Endothelial cell of umbilical vein (primary cell): ENCODE measurements at regions of chr6 and their contacts with region 1.

Region 1: DNA sequence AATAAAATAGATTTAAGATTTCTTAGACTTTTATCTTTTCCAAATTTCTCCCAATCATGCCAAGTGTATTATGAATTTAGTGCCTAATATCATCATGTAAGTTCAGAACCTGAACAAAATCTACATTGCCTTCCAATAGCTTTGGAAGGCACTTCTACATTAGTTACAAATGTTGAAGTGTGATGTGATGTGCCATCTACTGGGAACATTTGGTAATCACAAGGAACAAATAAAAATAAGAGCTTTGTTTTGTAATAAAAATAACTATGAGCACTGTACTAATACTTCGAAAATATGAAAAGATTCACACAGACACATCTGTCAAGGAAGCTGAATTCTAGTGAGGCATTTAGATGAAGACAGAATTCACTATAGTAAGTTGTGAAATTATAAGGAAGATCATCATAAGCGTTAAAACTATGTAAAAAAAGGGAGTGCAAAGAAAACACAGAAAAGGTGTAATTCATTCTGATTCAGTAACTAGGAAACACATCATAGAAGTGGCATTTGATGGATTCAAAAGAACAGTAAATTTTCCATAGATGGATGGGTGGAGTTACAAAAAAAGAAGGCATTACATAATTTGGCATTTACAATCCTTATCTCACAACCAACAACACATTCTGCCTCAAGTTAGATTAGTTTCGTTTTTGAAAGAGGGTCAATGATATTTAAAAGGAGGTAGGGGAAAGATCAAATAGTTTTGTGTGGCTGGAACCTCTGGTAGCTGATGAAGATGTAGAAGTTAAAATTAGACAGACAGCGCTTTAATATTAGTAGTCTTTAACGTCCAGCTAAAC is 161.0 kb downstream of the ASCC3 start:
- DNase-seq: peak; percentile 76
- H3K4me3 ChIP-seq: peak overlapping the region; percentile 16 to 83 (median 53)
- H3K27ac ChIP-seq: peak overlapping the region; percentile 48
- H3K4me1 ChIP-seq: peaks cover 4% of the 10 kb centered on the region
- H3K27me3 ChIP-seq: no peaks in the 10 kb centered on the region
- CTCF ChIP-seq: peak; percentile 18 to 22
- POLR2A ChIP-seq: no peak

Region 2: DNA sequence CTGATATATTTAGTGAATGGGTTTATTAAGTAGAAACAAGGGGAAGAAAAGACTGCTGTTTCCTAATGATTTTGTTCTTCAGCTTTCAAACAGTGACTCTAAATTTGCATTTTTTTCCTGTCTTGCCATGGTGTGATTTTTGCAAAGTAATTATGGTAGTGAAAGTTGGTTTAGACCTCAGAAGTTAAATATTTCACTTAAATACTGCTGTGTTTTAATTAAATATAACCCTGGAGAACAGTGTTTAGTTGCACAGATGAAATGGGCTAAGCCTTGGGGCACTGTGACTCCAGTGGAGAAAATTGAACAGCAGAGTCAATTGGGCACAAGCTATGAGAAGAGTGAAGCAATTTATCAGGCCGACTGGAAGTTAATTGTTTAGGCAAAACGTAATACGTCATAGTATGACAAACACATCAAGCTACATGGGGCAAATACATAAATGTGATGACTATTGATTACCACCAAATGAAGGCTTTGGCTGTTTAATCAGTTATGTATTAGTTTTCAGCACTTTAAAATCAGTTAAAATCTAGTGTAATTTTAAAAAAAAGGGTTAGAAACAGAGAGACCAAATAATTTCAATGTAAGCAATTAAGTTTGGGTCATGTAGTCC is 614.8 kb before region 1 on chr6:
- CTCF ChIA-PET with region 1: interaction called, 28 read pairs
- POLR2A ChIA-PET with region 1: no interaction called
- dilution Hi-C with region 1: no loop called
- intact Hi-C with region 1: loop called (anchors 5 kb)
- DNase-seq: no peak
- H3K4me3 ChIP-seq: no peak overlapping the region
- H3K27ac ChIP-seq: no peak overlapping the region
- H3K4me1 ChIP-seq: no peaks in the 10 kb centered on the region
- H3K27me3 ChIP-seq: peaks cover 11 to 25% of the 10 kb centered on the region in 2 experiments
- CTCF ChIP-seq: no peak
- POLR2A ChIP-seq: no peak

Region 3: DNA sequence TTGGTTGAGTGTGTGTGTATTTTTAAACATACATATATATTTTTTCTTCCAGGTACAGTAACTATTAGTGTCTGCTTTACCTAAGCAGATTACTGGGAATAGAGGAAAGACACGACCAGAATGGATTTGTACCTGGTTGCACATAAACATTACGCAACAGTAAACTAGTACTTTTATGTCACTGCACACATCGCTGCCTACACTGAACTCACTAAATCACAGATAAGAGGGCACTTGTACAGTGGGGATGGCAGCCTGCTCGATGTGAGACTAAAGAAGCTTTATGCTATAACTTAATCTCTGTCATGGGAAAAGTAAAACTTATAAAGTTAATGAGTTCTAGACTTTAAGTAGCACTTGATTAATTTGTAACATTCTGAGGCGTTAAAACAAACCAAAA is 165.9 kb before region 1 on chr6:
- CTCF ChIA-PET with region 1: no interaction called
- POLR2A ChIA-PET with region 1: no interaction called
- dilution Hi-C with region 1: no loop called
- intact Hi-C with region 1: no loop called
- DNase-seq: no peak
- H3K4me3 ChIP-seq: no peak overlapping the region
- H3K27ac ChIP-seq: no peak overlapping the region
- H3K4me1 ChIP-seq: no peaks in the 10 kb centered on the region
- H3K27me3 ChIP-seq: no peaks in the 10 kb centered on the region
- CTCF ChIP-seq: no peak
- POLR2A ChIP-seq: no peak

Region 4: DNA sequence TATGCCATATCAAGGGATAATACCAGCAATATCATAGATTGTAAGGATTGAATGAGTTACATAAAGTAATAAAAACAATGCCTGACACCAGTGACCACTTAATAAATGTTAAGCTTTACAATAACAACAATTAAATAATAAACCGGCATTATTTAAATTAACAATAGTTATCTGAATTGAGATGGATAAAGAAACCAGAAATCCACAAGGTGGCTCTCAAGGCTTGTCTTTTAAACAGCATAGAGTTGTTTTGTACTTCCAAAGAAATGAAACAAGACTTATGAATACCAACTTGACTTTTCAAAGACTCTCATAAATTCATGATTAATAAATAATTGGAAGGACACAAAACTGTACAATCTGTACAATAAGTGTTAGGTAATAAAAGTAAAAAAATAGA is 42.1 kb before region 1 on chr6:
- CTCF ChIA-PET with region 1: interaction called, 18 read pairs
- POLR2A ChIA-PET with region 1: no interaction called
- dilution Hi-C with region 1: no loop called
- intact Hi-C with region 1: no loop called
- DNase-seq: no peak
- H3K4me3 ChIP-seq: no peak overlapping the region
- H3K27ac ChIP-seq: no peak overlapping the region
- H3K4me1 ChIP-seq: no peaks in the 10 kb centered on the region
- H3K27me3 ChIP-seq: no peaks in the 10 kb centered on the region
- CTCF ChIP-seq: no peak
- POLR2A ChIP-seq: no peak

Region 5: DNA sequence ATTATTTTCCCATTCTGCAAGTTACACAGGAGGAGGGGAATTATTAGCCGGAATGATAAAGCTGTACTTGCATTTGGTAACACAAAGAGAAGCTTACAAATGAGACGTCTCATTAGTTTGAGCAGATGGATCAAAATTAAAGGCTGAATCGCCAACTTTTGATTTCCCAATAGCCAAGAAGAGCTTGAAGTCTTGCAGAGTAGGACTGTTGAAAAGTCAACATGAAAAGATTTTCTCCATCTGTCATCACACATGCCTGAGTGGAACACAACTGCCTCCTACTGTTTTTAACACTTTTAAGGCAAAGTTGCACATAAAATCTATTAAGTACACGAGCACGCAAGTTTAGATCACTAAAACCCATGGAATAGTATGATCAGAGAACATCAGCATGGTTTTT is 15.1 kb before region 1 on chr6:
- CTCF ChIA-PET with region 1: interaction called, 30 read pairs
- POLR2A ChIA-PET with region 1: no interaction called
- dilution Hi-C with region 1: no loop called
- intact Hi-C with region 1: no loop called
- DNase-seq: no peak
- H3K4me3 ChIP-seq: no peak overlapping the region
- H3K27ac ChIP-seq: no peak overlapping the region
- H3K4me1 ChIP-seq: no peaks in the 10 kb centered on the region
- H3K27me3 ChIP-seq: no peaks in the 10 kb centered on the region
- CTCF ChIP-seq: no peak
- POLR2A ChIP-seq: no peak

Region 6: DNA sequence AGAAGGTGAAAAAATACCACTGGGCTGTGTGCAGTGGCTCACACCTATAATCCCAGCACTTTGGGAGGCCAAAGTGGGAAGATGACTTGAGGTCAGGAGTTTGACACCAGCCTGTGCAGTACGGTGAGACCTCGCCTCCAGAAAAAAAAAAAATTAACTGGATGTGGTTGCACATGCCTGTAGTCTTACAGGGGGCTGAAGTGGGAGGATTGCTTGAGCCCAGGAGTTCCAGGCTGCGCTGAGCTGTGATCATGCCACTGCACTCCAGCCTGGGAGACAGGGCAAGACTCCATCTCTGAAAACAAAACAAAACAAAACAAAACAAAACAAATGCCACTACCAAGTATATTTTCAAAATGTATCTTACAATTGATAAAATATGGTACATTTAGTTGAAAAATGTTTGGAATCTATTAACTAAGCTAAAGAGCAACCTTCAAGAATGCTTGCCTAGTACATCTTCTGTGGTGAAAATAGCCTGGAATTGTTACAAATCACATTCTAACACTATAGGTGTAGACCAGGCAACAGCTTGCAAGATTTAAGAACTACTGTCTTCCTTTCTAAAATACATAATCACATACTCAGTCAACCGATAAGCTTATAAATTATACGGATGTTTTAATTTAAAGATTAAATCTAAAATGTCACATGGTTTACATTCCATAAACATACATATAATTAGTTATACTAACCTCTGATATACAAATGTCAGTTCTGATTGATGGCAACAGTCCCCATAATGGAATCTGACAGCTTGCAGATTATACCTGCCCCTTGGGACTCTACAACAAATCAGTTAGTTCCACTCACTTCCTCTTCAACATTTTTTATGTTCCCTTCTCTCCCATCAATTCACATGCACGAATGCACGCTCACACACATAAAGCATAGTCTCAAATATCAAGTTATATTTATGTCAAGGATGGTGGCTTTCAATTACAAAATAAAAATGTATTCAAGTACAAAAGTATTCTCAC is 10.2 kb after region 1 on chr6:
- CTCF ChIA-PET with region 1: interaction called, 31 read pairs
- POLR2A ChIA-PET with region 1: no interaction called
- dilution Hi-C with region 1: no loop called
- intact Hi-C with region 1: no loop called
- DNase-seq: no peak
- H3K4me3 ChIP-seq: no peak overlapping the region
- H3K27ac ChIP-seq: no peak overlapping the region
- H3K4me1 ChIP-seq: peaks cover 2% of the 10 kb centered on the region
- H3K27me3 ChIP-seq: no peaks in the 10 kb centered on the region
- CTCF ChIP-seq: no peak
- POLR2A ChIP-seq: no peak